Common myeloid progenitor, CD34-positive (primary cell): ENCODE measurements at regions of chr6 and their contacts with region 1.

Region 1: GRCh38 chr6:149129371-149130077 is 188.0 kb upstream of the TAB2 start:
- DNase-seq: peak; percentile 50 to 88 (median 85)
- H3K4me3 ChIP-seq: no peak overlapping the region
- H3K27ac ChIP-seq: peak overlapping the region in 1 of 2 experiments; percentile 65
- H3K4me1 ChIP-seq: peaks cover 15 to 79% (median 41%) of the 10 kb centered on the region in 4 experiments
- H3K27me3 ChIP-seq: no peaks in the 10 kb centered on the region

Region 2: DNA sequence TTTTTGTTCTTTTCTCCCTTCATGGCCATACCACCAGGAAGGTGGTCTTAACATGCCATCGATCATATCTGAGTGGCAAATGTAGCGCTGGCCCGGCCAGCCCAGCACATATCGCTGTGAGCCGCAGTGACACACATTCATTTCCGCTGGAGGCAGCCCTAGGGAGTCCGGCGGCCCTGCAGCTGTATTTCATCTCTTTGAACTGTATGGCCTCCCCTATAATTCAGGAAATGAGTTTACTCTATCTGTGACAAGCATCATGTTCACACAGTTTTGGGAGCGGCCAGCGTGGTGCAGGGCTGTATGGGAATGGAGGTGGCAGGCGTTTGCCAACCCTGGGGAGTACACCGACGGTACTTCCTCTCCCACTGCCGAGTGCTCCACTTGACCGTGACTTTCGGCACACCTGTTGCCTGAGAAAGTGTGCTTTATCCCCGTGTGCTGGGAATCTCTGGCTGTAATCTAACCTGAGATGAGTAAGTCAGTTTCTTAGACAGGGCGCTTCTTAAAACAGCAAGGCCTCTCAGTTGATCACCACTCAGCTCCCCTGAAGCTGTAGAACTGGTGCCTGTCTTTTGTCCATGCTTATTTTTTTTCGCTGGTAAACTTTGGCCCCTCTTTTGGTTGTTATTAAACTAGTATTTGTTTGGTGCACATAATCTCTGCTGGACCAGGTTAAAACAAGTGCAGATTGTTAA is 69.1 kb before region 1 on chr6:
- CTCF ChIA-PET with region 1: no interaction called
- POLR2A ChIA-PET with region 1: no interaction called
- DNase-seq: peak; percentile 77 to 92 (median 83)
- H3K4me3 ChIP-seq: peak overlapping the region in 3 of 7 experiments; percentile 29 to 62 (median 60)
- H3K27ac ChIP-seq: peak overlapping the region; percentile 58 to 64
- H3K4me1 ChIP-seq: peaks cover 13 to 51% (median 33%) of the 10 kb centered on the region in 4 experiments
- H3K27me3 ChIP-seq: no peaks in the 10 kb centered on the region

Region 3: GRCh38 chr6:149094156-149094555 is 35.4 kb before region 1 on chr6:
- CTCF ChIA-PET with region 1: interaction called, 11 read pairs
- POLR2A ChIA-PET with region 1: no interaction called
- DNase-seq: peak in 1 of 3 donors; percentile 71
- H3K4me3 ChIP-seq: peak overlapping the region in 2 of 7 experiments; percentile 14 to 40
- H3K27ac ChIP-seq: no peak overlapping the region
- H3K4me1 ChIP-seq: peaks cover 10 to 56% (median 39%) of the 10 kb centered on the region in 4 experiments
- H3K27me3 ChIP-seq: no peaks in the 10 kb centered on the region

Region 4: DNA sequence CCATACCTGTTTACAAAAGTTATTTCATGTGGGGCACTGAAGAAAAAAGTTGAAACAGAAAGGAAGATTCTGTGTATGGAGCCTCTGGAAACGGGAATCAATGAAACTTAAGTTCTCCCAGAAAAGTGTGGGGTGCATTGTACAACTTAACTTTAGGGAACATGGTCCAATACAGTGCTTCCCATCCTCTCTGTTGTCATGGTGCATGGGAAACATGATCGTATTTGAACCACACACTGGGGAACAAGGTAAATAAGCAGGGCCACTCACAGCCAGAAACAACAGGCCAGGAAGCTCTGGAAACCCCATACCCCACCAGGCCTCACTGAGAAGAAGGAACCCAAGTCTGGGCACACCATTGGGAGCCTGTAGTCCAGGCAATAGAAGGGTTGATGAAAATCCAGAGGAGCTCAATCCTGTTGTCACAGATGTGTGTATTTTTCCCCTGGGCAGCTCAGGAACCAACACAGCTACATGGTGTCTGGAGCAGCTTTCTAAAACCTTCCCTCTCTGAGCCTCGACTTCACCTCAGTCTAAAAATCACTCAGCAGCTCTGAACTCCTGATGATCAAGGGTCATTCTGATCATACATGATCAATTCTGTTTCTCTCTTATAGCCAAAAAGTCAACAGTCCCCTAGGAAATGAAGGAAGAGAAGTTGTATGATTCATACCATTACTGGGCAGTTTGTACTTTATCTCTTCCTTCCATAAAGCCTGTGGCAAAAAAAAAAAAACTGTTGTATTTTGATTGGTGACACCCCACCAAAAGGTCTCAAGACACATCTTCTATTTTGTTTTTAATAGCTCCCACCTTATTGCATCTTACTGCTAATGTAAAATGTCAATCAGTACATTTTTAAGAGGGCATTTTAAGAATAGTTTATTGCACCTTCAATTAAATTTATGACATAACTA is 10.5 kb before region 1 on chr6:
- CTCF ChIA-PET with region 1: interaction called, 8 read pairs
- POLR2A ChIA-PET with region 1: interaction called, 11 read pairs
- DNase-seq: peak; percentile 73 to 92 (median 85)
- H3K4me3 ChIP-seq: peak overlapping the region in 1 of 7 experiments; percentile 29
- H3K27ac ChIP-seq: peak overlapping the region; percentile 86 to 95
- H3K4me1 ChIP-seq: peaks cover 17 to 66% (median 34%) of the 10 kb centered on the region in 4 experiments
- H3K27me3 ChIP-seq: no peaks in the 10 kb centered on the region

Region 5: DNA sequence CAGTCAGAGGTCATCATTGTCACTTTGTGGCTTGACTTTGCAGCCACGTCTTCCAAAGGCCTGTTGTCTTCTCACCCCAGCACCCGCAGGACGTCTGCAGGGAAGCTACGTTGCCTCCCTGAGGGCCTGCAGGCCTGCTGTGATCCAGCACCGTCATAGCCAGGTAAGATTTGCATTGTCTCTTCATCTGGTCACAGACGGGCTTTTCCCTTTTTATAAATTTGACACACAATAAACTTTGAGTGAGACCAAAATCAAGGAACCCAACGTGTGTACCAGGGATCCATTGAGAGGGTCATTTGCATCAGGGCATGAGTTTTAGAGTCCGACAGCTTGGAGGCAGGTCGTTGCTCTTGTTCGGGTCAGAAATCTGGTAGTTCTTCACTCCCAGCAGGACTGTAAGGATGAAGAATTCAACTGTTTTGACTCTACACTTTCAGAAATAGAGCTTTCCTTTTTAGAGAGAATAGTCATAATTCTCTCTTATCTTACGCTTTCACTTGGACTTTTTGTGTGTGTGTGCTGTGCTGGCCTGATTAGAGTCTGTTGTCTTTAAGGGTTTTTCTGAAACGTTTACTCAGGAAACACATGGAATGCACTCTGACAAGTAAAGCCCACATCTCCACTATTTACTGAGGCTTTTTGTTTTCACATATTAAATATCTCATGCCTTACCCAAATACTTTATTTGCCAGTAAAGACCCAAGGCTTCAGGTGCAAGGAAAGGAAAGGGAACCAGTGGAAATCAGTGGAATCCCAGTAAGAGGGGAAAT is 10.8 kb after region 1 on chr6:
- CTCF ChIA-PET with region 1: interaction called, 30 read pairs
- POLR2A ChIA-PET with region 1: interaction called, 11 read pairs
- DNase-seq: peak; percentile 83 to 98 (median 94)
- H3K4me3 ChIP-seq: peak overlapping the region in 5 of 7 experiments; percentile 12 to 61 (median 28)
- H3K27ac ChIP-seq: peak overlapping the region; percentile 82 to 89
- H3K4me1 ChIP-seq: peaks cover 11 to 49% (median 25%) of the 10 kb centered on the region in 4 experiments
- H3K27me3 ChIP-seq: no peaks in the 10 kb centered on the region